Activated CD4-positive, alpha-beta T cell treated with anti-CD3 and anti-CD28 coated beads, Interleukin-2, amount 10 ng/mL, durations not matched to agents 24 days and 14 days (primary cell): ENCODE measurements at regions of chr2 and their contacts with region 1.

Region 1: DNA sequence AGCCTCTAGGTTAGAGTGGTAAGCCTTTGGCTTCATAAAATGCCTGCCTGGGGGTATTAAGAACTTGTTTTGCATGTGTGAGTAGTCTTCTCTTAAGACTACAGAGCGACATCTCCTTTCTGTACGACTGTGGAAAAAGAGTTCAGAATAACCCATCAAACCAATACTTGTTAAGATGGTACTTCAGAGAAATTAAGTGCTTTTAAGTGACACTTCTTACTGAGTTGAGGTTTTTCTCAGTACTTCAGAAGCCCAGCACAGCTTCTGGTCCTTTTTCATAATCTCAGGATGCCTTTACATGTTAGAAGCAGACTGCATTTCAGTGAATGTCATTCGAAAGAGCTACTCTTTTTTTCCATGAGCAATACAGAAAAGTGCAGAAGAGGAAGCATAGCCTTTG is 10.8 kb downstream of the XRCC5 start:
- DNase-seq: peak; percentile 75
- H3K4me3 Mint-ChIP-seq: peak overlapping the region; percentile 68
- H3K27ac Mint-ChIP-seq: peak overlapping the region; percentile 96
- H3K4me1 Mint-ChIP-seq: peaks cover 69% of the 10 kb centered on the region
- H3K27me3 Mint-ChIP-seq: no peaks in the 10 kb centered on the region

Region 2: GRCh38 chr2:215522237-215522636 is 597.7 kb before region 1 on chr2:
- intact Hi-C with region 1: no loop called
- DNase-seq: no peak
- H3K4me3 Mint-ChIP-seq: no peak overlapping the region
- H3K27ac Mint-ChIP-seq: no peak overlapping the region
- H3K4me1 Mint-ChIP-seq: no peaks in the 10 kb centered on the region
- H3K27me3 Mint-ChIP-seq: peaks cover 4% of the 10 kb centered on the region

Region 3: DNA sequence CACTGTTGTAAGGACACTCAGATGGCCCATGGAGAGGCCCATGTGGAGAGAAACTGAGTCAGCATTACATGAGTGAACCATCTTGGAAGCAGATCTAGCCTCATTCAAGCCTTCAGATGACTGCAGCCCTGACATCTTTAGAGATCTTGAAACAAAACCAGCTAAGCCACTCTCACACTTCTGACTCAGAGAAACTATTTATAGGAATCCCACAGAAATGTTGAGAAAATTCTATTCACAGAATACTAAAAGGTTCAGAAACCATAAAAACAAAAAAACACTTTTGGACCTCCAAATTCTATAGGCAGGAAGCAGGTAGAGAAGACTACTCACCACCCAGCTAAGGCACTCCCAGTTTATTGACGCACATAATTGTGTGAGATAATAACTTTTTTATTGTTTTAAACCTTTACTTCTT is 29.6 kb before region 1 on chr2:
- intact Hi-C with region 1: no loop called
- DNase-seq: no peak
- H3K4me3 Mint-ChIP-seq: no peak overlapping the region
- H3K27ac Mint-ChIP-seq: peak overlapping the region; percentile 55
- H3K4me1 Mint-ChIP-seq: peaks cover 23% of the 10 kb centered on the region
- H3K27me3 Mint-ChIP-seq: no peaks in the 10 kb centered on the region

Region 4: GRCh38 chr2:216131175-216131926 is 11.4 kb after region 1 on chr2:
- intact Hi-C with region 1: loop called (anchors 1 kb)
- DNase-seq: no peak
- H3K4me3 Mint-ChIP-seq: no peak overlapping the region
- H3K27ac Mint-ChIP-seq: peak overlapping the region; percentile 81
- H3K4me1 Mint-ChIP-seq: peaks cover 59% of the 10 kb centered on the region
- H3K27me3 Mint-ChIP-seq: no peaks in the 10 kb centered on the region

Region 5: GRCh38 chr2:216139884-216140283 is 19.9 kb after region 1 on chr2:
- intact Hi-C with region 1: loop called (anchors 2 kb)
- DNase-seq: peak; percentile 80
- H3K4me3 Mint-ChIP-seq: no peak overlapping the region
- H3K27ac Mint-ChIP-seq: peak overlapping the region; percentile 46
- H3K4me1 Mint-ChIP-seq: peaks cover 31% of the 10 kb centered on the region
- H3K27me3 Mint-ChIP-seq: no peaks in the 10 kb centered on the region

Region 6: GRCh38 chr2:216206041-216206703 is 86.2 kb after region 1 on chr2:
- intact Hi-C with region 1: loop called (anchors 1 kb)
- DNase-seq: peak; percentile 50
- H3K4me3 Mint-ChIP-seq: peak overlapping the region; percentile 32
- H3K27ac Mint-ChIP-seq: peak overlapping the region; percentile 89
- H3K4me1 Mint-ChIP-seq: peaks cover 44% of the 10 kb centered on the region
- H3K27me3 Mint-ChIP-seq: no peaks in the 10 kb centered on the region